ENCODE measurements at regions of chr1 and their contacts with region 1.

Region 1: GRCh38 chr1:198175423-198176170 is 18.8 kb downstream of the NEK7 start:
- DNase-seq: no peak
- H3K4me3 ChIP-seq: no peak overlapping the region
- H3K27ac ChIP-seq: peak overlapping the region; percentile 15
- H3K4me1 ChIP-seq: peaks cover 100% of the 10 kb centered on the region
- H3K27me3 ChIP-seq: no peaks in the 10 kb centered on the region
- CTCF ChIP-seq: no peak

Region 2: DNA sequence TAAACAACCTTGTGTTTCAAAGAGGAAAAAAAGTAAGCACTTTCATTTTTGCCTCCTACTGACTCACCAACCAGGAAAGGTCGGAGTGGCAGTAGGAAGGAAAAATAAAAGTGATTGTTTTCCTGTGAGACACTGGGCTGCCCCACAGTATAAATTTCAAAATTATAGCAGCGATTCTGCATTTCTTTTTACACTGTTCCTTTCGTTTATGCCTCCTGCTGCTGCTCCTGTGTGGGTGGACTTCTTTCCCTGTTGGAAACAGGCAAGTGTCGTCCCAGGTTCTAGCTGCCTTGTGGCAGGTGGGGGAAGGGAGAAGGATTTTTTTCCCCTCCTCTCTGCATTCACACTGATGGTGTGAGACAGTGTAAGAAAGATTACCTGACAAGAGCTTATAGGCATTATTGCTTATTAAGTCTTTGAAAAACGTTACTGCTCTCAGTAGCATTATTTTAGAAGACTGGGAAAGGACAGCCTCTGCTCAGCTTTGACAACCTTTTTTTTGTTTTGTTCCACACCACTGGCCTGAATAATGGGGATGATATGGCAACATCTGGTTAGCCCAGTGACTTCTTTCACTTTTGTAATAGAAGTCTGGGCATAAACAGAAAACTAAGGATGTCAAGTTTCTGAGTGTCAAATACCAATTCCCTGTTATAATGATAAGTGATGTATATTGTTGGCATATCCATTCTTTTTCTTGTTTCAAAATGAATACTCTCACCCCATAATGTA is 59.1 kb after region 1 on chr1:
- intact Hi-C with region 1: loop called (anchors 5 kb)
- DNase-seq: no peak
- H3K4me3 ChIP-seq: peak overlapping the region; percentile 34
- H3K27ac ChIP-seq: peak overlapping the region; percentile 44
- H3K4me1 ChIP-seq: peaks cover 65% of the 10 kb centered on the region
- H3K27me3 ChIP-seq: no peaks in the 10 kb centered on the region
- CTCF ChIP-seq: no peak

Measured in left ventricle myocardium inferior (tissue), 1 donor.